ENCODE measurements at regions of chr5 and their contacts with region 1.

Region 1: DNA sequence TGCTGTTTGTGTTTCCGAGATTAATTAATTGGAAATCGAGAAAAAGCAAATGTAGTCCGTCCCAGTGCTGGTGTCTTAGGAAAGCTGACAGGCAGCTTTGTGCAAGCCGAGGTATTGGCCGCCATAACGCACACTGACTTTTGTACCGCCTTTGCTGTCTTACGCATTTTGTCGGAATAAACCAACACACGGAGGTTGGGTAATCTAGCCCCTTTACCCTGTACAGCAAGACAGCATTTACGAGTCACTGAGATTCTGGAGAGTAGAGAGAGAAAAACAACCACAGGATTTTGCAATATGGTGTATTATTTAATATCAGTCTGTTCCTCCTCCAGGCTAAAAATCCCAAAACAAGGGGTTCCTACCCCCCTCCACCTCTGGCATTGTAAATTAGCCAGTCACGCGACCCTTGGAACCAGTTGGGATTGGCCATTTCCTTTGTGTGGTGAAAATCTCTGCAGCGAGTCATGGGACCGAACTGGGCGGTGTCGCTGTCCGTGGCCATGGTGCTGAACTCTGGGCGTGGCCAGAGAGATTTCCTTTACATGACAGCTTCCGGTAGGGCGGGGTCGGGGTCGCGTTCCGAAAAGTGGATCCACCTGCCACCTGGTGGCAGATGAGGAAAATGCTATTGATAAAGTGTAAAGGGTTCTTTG is 10.3 kb upstream of the PCDHB1 start:
- DNase-seq: peak; percentile 92
- ATAC-seq: peak; percentile 97

Region 2: DNA sequence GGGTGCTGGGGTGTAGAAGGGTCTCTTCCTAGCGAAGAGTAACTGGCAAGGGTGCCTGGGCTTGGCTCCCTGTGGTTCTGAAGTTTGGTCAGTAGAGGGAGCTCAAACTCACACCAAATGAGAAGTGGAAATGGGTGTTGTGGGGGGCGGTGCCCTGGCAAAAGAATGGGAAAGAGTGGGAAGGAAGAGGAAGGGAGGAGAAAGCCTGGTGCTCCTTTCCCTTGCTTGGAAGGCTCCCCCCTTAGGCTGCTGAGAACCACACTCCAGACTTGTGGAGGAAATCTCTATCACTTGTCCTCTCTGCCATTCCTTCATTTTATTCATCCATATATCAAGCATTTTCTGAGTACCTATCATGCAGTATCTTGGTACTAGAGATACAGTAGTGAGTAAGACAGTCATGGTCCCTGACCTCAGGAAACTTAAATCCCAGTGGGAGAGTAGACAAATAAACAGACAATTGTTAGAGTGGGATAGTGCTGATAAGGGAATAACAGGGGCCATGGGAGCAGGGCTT is 667.9 kb before region 1 on chr5:
- intact Hi-C with region 1: loop called (anchors 10 kb)
- DNase-seq: peak; percentile 84
- ATAC-seq: peak; percentile 79

Region 3: GRCh38 chr5:141149812-141150211 is 108.9 kb after region 1 on chr5 and contains the start of gene PCDHB6:
- intact Hi-C with region 1: no loop called
- DNase-seq: no peak
- ATAC-seq: no peak
- total RNA-seq, gene PCDHB6: 0.35 TPM